A549 (cell line): ENCODE measurements at regions of chr16 and their contacts with region 1.

Region 1: DNA sequence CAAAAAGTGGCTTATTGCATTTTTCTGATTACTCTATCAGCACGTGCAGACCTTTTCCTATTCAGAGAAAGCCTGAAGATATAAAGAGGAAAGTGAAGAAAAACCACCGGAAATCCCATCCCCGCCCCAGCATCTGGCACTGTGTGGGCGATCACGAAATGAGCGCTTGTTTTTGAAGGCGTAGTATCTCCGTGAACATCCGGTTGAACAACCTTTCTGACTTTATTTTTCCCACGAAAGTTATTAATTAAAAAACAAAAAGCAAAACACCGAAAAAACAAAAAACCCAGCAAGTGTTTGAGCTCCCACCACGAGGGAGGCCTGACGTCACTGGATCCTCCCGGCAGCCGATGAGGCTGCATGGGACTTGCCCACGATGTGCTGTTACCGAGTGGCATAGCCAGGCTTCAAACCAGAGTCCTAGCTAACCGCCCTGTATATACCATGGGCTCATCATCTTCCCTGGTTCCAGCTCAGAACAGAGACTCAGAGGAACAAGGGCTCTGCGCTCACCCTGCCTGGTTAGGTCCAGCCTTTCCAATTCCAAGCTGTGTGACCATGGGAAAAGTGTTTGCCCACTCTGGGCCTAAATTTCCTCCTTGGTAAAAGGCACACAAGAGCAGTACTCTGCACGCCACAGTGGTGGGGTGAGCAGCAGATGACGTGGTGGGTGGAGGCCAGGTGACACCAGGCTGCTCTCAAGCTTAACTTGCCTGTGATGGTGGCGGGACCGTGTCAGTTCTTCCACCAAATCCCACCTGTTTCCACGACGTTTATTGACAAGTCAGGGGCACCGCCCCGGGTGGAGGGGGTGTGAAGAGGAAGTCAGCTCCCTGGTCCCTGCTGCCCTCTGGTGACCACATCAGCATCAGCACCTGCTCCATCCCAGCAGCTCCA is 34.3 kb upstream of the IL21R start:
- DNase-seq: peak; percentile 74 to 87
- ATAC-seq: peak; percentile 69 to 77
- H3K4me3 ChIP-seq: no peak overlapping the region
- H3K27ac ChIP-seq: peak overlapping the region; percentile 25 to 83; a peak in 4 of 6 replicates
- H3K4me1 ChIP-seq: peaks cover 40% of the 10 kb centered on the region
- CTCF ChIP-seq: peak; percentile 91
- EP300 ChIP-seq: no peak
- POLR2A ChIP-seq: no peak
- RAD21 ChIP-seq: peak; percentile 93 to 97

Region 2: GRCh38 chr16:27164352-27164751 is 203.4 kb before region 1 on chr16:
- CTCF ChIA-PET with region 1: interaction called, 10 read pairs
- POLR2A ChIA-PET with region 1: no interaction called
- DNase-seq: no peak
- ATAC-seq: no peak
- H3K4me3 ChIP-seq: no peak overlapping the region
- H3K27ac ChIP-seq: no peak overlapping the region
- H3K4me1 ChIP-seq: no peaks in the 10 kb centered on the region
- CTCF ChIP-seq: no peak
- EP300 ChIP-seq: no peak
- POLR2A ChIP-seq: no peak
- RAD21 ChIP-seq: no peak

Region 3: DNA sequence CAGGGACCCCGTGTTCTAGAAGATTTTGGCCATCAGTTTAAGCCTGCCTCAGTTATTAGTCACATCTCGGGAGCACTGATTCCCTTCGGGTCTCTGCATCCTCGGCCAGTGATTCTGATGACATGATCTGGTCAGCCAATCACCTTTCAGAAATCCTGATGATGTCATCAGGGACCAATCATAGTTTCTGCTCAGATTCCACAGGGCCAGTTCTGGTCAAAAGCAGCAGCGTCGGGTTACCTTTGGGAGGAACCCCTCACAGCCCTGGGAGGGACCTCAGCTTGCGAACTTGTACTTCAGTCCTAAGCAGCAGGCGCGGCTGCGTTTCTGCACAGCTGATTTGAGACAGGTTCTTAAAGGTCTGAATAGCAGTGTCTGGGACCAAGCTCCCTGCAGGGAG is 150.5 kb before region 1 on chr16:
- CTCF ChIA-PET with region 1: interaction called, 62 read pairs
- POLR2A ChIA-PET with region 1: no interaction called
- DNase-seq: peak in 1 of 2 experiments; percentile 29
- ATAC-seq: peak in 1 of 2 experiments; percentile 21; a peak in 2 of 6 replicates
- H3K4me3 ChIP-seq: no peak overlapping the region
- H3K27ac ChIP-seq: no peak overlapping the region
- H3K4me1 ChIP-seq: no peaks in the 10 kb centered on the region; the same call in 2 of the 3 replicates
- CTCF ChIP-seq: no peak
- EP300 ChIP-seq: no peak
- POLR2A ChIP-seq: no peak
- RAD21 ChIP-seq: no peak

Region 4: GRCh38 chr16:27314161-27314723 is 53.5 kb before region 1 on chr16:
- CTCF ChIA-PET with region 1: interaction called, 14 read pairs
- POLR2A ChIA-PET with region 1: interaction called, 3 read pairs
- DNase-seq: peak; percentile 54 to 68
- ATAC-seq: peak; percentile 21 to 47
- H3K4me3 ChIP-seq: peak overlapping the region; percentile 99
- H3K27ac ChIP-seq: peak overlapping the region; percentile 96 to 97
- H3K4me1 ChIP-seq: peaks cover 31% of the 10 kb centered on the region
- CTCF ChIP-seq: no peak
- EP300 ChIP-seq: no peak
- POLR2A ChIP-seq: no peak
- RAD21 ChIP-seq: no peak

Region 5: GRCh38 chr16:27355610-27356009 is 12.1 kb before region 1 on chr16:
- CTCF ChIA-PET with region 1: interaction called, 17 read pairs
- POLR2A ChIA-PET with region 1: no interaction called
- DNase-seq: peak in 1 of 2 experiments; percentile 64
- ATAC-seq: peak; percentile 62 to 87; a peak in 5 of 6 replicates
- H3K4me3 ChIP-seq: no peak overlapping the region
- H3K27ac ChIP-seq: no peak overlapping the region
- H3K4me1 ChIP-seq: no peaks in the 10 kb centered on the region
- CTCF ChIP-seq: peak; percentile 21; the same call in 2 of the 3 replicates
- EP300 ChIP-seq: no peak
- POLR2A ChIP-seq: no peak
- RAD21 ChIP-seq: peak; percentile 14 to 23; a peak in 1 of 5 replicates